Transverse colon (tissue), 4 donors: ENCODE measurements at regions of chr6 and their contacts with region 1.

Region 1: DNA sequence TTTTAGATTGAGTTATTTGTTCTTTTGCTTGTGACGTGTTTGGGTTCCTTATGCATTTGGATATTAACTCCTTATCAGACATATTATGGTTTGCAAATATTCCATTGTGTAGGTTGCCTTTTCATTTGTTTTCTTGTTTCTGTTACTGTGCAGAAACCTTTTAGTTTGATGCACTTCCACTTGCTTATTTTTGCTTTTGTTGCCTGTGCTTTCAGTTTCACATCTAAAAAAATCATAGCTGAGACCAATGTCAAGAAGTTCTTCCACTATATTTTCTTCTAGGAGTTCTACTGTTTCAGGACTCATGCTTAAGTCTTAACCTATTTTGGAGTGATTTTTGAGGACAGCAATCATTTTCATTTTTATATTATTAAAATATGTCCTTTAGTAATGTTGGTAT is 113.5 kb downstream of the EPM2A start:
- DNase-seq: no peak
- H3K4me3 ChIP-seq: no peak overlapping the region
- H3K27ac ChIP-seq: no peak overlapping the region
- H3K4me1 ChIP-seq: no peaks in the 10 kb centered on the region
- H3K27me3 ChIP-seq: no peaks in the 10 kb centered on the region
- CTCF ChIP-seq: no peak
- EP300 ChIP-seq: no peak
- POLR2A ChIP-seq: no peak

Region 2: GRCh38 chr6:145643760-145644159 is 22.0 kb after region 1 on chr6:
- in situ Hi-C with region 1: no loop called
- intact Hi-C with region 1: loop called (anchors 1 kb)
- DNase-seq: no peak
- H3K4me3 ChIP-seq: no peak overlapping the region
- H3K27ac ChIP-seq: no peak overlapping the region
- H3K4me1 ChIP-seq: peaks cover 0 to 5% (median 1%) of the 10 kb centered on the region in 4 donors
- H3K27me3 ChIP-seq: no peaks in the 10 kb centered on the region
- CTCF ChIP-seq: no peak
- EP300 ChIP-seq: no peak
- POLR2A ChIP-seq: no peak